ENCODE measurements at regions of chr1 and their contacts with region 1.

Region 1: GRCh38 chr1:19651141-19651737 is 7.1 kb downstream of the NBL1 start:
- DNase-seq: no peak

Region 2: DNA sequence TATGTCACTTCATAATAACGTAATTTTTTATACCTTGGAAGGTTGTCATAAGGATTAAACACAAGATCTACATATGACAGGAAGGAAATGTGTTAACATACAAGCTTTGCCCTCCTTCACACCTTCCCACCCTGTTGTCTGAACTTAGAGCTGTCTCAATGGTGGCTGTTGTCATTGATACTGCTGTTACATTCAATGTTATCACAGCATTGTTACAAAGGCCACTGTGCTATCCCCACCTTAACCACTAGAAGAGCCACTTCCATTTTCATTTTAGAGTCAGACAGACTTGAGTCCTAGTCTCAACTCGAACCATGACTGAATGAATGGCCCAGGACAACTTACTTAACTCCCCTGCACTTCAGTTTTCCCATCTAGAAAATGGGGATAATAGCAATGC is 823.0 kb before region 1 on chr1:
- intact Hi-C with region 1: no loop called
- DNase-seq: no peak

Region 3: GRCh38 chr1:19257178-19257914 is 393.9 kb before region 1 on chr1:
- intact Hi-C with region 1: loop called (anchors 5 kb)
- DNase-seq: no peak

Region 4: DNA sequence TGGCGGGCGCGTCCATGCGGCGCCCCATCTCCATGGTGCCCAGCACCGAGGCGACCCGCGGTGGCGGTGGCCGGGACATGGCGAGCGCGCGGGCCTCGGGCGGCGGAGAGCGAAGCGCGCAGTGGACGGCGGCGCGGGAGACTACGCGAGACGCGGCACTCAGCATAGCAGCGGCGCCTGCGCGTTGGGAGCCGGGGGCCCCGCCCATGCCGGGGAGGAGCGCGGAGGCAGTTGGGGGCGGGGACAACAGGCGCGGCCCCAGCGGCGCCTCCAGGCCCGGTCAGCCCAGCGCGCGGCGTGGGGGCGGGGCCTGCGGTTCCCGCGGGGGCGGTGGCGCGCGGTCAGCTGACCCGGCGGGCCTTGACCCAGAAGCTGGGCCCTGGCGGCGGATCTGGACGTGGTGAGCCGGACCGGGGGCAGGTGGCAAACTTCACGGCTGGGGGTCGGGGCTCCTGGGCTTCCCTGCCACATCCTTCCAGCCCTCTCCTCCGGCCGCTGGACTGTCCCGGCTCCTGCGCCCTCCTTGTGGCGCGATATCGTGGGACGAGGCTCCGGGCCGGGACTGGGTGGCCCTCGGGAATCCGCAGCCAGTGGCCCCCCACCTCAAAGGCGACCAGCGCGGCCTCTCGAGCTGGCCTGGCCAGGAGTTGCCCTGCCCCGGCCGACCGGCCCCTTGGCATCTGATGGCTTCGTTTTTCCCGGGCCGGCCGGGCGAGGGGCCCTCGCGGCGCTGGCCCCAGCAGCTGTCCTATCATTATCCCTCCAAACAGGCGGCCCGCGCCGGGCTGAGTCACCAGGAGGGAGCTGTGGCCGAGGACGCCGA is 339.1 kb before region 1 on chr1 and contains the starts of genes AKR7A2 and SLC66A1:
- intact Hi-C with region 1: loop called (anchors 1 kb)
- DNase-seq: peak; percentile 96
- total RNA-seq, gene AKR7A2: 33.5 TPM
- total RNA-seq, gene SLC66A1: 7.5 TPM

Region 5: DNA sequence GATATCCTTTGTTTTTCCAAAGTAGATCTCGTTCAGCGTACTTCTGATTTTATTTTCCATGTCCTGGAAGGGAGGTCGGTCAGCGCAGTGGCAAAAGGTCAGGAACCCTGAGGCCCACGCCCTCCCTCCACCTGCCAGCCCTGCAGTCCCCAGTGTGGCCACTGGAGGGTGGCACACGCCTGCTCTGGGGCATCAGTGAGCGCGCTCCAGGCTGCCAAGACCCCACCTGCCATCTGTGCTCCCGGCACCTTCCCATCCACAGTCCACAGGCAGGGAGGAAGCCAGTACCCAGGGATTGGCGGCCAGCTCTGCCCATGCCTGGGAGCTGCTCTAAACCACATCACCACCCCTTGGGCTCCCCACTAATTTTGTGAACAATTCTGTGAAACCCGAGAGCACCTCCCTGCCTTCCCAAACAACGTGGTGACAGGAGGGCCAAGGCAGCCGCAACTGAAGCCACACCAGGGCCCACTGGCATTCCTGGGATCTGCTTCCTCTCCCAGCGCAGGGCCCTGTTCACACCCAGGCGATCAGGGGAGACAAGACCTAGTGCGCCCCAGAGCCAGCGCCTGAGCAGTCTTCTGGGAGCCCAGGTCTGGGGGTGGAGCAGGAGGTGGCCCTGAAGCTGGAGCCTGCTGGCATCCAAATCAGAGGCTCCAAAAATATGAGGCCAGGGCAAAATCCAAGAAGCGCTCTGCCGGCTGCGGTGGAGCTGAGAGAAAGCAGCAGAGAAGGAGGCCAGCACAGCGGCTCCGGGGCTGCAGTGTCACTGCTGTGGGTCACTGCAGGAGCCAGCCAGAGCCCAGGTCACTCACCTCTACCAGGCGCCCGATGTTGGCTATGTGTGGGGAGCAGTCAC is 306.6 kb before region 1 on chr1:
- intact Hi-C with region 1: loop called (anchors 1 kb)
- DNase-seq: no peak

Region 6: DNA sequence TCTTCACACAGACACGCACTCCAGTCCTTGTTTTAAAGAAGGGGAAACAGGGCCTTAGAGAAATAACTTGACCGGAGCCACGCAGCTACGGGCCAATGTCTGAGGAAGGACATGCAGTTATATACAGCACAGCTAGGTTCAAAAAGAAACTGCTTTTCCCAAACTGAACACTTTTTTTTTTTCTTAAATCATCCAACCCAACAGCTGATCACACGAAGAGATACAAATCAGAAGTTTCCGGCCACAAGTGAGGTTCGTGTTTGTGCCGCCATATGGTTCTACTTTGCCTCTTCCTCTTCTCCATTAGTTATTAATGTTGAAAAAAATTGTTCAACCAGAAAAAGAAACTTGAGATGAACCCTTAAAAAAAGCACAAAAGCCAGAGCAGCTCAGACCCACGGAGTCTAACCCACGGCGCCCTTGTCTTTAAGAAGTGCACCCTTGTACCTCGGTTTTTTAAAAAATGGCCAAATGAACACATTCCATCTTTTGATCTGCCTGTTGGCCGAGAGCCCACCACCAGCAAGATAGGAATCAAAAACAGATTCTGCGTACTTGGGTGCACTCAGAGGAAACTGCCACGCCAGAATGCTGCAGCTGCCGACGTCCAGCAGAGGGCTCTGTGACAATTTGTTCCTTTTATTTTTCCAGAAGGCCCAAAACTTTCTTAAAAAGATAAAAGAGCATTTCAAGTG is 260.2 kb before region 1 on chr1:
- intact Hi-C with region 1: loop called (anchors 2 kb)
- DNase-seq: no peak

Region 7: DNA sequence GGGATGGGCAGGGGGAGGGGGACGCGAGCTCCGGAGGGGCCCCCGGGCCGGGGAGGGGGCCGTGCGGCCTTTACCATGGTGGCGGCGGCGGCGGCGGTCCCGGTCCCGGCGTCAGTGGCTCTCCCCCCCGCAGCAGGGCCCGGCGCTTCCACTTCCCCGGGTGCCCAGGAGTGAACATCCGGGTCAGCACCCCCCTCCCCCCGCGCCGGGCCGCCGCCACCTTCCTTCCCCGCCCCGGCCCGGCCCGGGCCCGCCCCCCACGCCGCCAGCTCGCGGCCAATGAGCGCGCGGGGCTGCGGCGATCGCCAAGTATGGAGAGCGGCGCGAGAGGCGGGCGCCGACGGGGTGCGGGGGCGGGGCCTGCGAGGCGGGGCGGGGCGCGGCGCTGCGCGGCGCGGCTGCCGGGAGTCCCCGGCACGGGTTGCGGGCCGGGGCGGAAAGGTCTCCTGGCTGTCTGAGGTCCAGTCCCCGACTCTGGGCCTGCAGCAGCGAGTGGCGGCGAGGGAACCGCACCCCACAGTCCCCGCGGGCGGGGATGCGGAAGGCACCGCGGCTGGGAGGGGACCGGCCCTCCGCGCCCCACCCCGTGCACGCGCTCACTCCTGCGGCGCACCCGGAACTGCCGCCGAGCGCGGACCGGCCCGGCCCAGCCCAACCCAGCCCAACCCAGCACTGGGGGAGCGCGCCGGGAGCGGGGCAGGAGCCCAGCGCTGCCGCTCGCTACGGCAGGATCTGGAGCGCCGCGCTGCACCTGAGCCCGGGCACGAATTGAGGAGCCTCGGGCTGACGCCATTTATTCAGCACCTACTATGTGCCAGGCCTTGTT is 165.7 kb before region 1 on chr1 and contains the start of gene CAPZB:
- intact Hi-C with region 1: loop called (anchors 5 kb)
- DNase-seq: peak; percentile 98
- total RNA-seq, gene CAPZB: 213 TPM

Region 8: DNA sequence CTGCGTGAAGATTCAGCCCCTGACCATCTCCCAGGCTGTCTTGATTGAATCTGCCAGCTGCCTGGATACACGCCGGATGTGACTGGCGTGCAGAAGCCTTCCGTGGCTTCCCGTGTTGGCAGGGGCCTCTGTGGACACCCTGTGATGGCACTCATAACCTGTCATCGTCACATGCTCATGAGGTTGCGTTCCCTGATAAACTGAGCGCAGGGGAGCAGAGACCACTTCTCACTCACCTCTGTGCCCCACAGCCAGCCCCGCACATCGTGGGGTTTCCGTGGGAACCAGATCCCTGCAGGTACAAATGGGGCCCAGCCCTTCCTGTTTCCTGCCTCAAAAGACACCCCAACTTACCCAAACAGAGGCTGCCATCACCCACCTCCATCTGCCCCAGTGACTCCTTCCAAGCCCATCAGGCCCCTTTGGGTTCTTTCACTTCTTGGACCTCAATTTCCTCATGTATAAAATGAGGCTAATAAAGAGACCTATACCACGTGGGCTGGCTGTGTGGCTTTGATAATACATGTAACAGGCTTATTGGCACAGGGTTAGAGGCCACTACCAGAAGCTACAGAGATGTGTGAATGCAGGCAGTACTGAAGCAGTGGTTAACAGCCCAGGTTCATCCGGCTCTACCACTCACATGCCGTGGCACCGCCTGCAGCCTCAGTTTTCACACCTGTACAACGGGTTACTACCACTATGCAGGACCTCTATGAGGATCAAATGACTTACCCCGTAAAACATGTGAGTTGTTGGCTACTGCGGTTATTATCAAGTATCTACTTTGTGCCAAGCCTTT is 37.0 kb after region 1 on chr1:
- intact Hi-C with region 1: no loop called
- DNase-seq: no peak

Region 9: DNA sequence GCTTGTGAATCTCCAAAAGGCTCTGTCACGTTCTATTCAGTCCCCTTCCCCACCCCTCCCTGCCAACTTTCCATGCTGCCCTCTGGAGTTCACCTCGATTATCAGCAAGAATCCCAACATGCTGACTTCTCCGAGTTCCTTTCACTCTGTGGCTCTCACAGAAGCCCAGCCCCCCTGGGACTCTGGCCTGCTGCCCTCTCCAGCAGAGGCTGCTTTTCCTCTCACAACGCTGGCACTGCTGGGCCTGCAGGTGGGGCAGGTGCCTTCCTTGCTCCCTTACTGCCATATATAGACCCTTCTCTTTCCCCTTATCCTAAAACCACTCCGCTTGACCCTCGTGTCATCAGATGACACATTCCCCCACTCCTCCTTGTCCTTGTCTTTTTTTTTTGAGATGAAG is 174.1 kb after region 1 on chr1:
- intact Hi-C with region 1: no loop called
- DNase-seq: no peak